Activated CD4-positive, alpha-beta T cell treated with anti-CD3 and anti-CD28 coated beads for 36 hours (primary cell): ENCODE measurements at regions of chr1 and their contacts with region 1.

Region 1: DNA sequence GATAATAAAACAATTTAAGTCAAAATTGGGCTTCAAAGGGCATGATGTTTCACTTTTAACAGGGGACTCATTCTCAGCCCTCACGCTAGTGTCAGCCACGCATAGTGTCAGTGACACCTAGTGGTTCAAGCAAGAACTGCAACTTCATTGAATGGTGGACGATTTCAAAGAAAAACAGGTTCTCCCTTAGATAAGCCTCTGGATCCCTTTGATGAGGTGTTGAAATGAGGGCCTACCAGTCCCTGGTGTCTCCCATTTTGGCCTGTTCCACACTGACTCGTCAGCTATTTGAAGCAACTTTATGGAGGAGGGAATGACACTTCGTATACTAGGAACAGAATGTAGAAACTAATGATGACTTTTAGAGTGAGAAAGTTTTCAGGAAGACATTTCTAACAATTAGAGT is 56.2 kb downstream of the FCRL5 start:
- DNase-seq: peak; percentile 55
- ATAC-seq: peak; percentile 63
- H3K4me3 Mint-ChIP-seq: no peak overlapping the region
- H3K27ac Mint-ChIP-seq: no peak overlapping the region
- H3K4me1 Mint-ChIP-seq: no peaks in the 10 kb centered on the region
- H3K27me3 Mint-ChIP-seq: peaks cover 21% of the 10 kb centered on the region

Region 2: GRCh38 chr1:157193702-157194391 is 302.3 kb before region 1 on chr1:
- CTCF ChIA-PET with region 1: interaction called, 12 read pairs
- POLR2A ChIA-PET with region 1: no interaction called
- intact Hi-C with region 1: loop called in 1 of 2 experiments (anchors 5 kb)
- DNase-seq: peak; percentile 83
- ATAC-seq: peak; percentile 59
- H3K4me3 Mint-ChIP-seq: no peak overlapping the region
- H3K27ac Mint-ChIP-seq: no peak overlapping the region
- H3K4me1 Mint-ChIP-seq: no peaks in the 10 kb centered on the region
- H3K27me3 Mint-ChIP-seq: peaks cover 30% of the 10 kb centered on the region